Activated naive CD4-positive, alpha-beta T cell treated with anti-CD3 and anti-CD28 coated beads for 36 hours (primary cell): ENCODE measurements at regions of chr9 and their contacts with region 1.

Region 1: DNA sequence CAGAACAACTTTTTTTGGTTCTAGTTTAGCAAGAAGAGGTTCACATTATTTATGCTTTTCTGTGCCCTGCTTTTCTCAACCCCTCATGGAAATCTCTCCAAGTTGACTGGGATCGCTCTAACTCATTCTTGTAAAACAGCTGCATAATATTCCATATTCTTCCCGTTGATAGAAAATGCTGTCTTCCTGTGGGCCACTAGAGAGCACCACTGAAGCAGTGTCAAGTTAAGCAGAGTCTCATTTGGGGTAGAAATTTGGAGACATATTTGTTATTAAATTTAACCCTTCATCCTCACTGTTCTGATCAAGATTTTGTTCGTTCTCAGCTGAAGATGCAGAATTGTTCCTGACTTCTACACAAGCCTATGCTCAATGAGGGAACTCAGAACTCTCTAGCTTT is 140.1 kb downstream of the CEMIP2 start:
- DNase-seq: no peak
- H3K4me3 Mint-ChIP-seq: no peak overlapping the region
- H3K27ac Mint-ChIP-seq: no peak overlapping the region
- H3K4me1 Mint-ChIP-seq: no peaks in the 10 kb centered on the region
- H3K27me3 Mint-ChIP-seq: no peaks in the 10 kb centered on the region

Region 2: GRCh38 chr9:71683598-71684235 is 55.5 kb after region 1 on chr9:
- CTCF ChIA-PET with region 1: interaction called, 7 read pairs
- intact Hi-C with region 1: loop called (anchors 2 kb)
- DNase-seq: no peak
- H3K4me3 Mint-ChIP-seq: no peak overlapping the region
- H3K27ac Mint-ChIP-seq: no peak overlapping the region
- H3K4me1 Mint-ChIP-seq: peaks cover 27% of the 10 kb centered on the region
- H3K27me3 Mint-ChIP-seq: no peaks in the 10 kb centered on the region

Region 3: DNA sequence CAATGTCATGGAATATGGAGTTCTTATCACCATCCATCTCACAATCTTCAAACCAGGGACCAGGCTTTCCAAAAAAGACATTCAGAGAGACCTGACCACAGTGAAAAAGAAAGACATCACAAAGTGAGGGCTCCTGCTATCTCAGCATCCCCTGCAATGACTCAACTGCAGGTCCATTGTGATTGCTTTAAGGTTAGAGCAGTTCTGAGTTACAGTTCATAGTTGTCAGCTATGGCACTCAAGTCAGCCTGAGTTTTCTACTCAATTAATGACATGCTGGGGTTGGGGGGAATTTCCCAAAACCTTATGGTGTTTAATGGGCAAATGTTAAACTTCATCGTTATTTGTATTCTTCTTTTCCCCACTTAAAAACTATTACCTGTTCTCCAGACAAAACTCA is 81.1 kb after region 1 on chr9:
- CTCF ChIA-PET with region 1: interaction called, 5 read pairs
- intact Hi-C with region 1: loop called (anchors 5 kb)
- DNase-seq: peak; percentile 11
- H3K4me3 Mint-ChIP-seq: no peak overlapping the region
- H3K27ac Mint-ChIP-seq: peak overlapping the region; percentile 11
- H3K4me1 Mint-ChIP-seq: peaks cover 25% of the 10 kb centered on the region
- H3K27me3 Mint-ChIP-seq: no peaks in the 10 kb centered on the region

Region 4: DNA sequence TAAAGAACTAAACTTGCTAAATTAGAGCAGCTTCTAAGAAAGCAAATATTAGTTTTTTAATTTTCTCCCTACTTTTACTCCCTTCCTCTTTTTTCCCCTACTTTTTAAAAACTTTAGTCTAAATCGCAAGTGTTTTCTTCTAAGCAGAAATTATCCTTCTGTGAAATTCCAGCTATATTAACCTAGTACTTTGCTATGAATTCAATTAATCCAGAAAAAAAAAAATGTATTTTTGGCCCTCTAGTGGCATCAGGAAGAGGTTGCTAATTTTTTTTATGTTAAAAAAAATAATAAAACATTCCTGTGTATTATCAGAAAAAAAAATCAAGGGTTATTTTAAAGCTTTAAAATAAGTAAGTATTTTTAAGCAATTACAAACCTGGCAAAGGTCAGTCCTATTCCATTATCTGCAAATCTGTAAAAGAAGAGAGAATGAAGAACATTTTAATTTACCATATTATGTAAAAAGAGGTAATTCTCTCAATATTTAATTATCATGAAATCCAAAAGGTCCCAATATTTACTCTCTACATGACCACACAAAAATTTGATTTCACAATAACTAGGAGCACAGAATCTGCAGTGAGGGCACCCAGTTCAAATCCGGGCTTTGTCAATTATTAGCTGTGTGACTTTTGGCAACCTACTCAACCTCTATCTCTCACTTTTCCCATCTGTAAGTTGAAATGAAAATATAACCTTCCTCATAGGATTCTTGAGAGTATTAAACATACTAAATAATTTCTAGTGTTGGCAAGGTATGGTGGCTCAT is 88.1 kb after region 1 on chr9:
- CTCF ChIA-PET with region 1: interaction called, 15 read pairs
- intact Hi-C with region 1: loop called (anchors 5 kb)
- DNase-seq: no peak
- H3K4me3 Mint-ChIP-seq: no peak overlapping the region
- H3K27ac Mint-ChIP-seq: no peak overlapping the region
- H3K4me1 Mint-ChIP-seq: peaks cover 2% of the 10 kb centered on the region
- H3K27me3 Mint-ChIP-seq: no peaks in the 10 kb centered on the region